Activated CD4-positive, alpha-beta T cell treated with anti-CD3 and anti-CD28 coated beads for 36 hours (primary cell): ENCODE measurements at regions of chr17 and their contacts with region 1.

Region 1: GRCh38 chr17:15257258-15257788 is 7.8 kb downstream of the PMP22 start:
- DNase-seq: peak; percentile 73
- ATAC-seq: peak; percentile 62
- H3K4me3 Mint-ChIP-seq: no peak overlapping the region
- H3K27ac Mint-ChIP-seq: no peak overlapping the region
- H3K4me1 Mint-ChIP-seq: peaks cover 15% of the 10 kb centered on the region
- H3K27me3 Mint-ChIP-seq: peaks cover 59% of the 10 kb centered on the region

Region 2: DNA sequence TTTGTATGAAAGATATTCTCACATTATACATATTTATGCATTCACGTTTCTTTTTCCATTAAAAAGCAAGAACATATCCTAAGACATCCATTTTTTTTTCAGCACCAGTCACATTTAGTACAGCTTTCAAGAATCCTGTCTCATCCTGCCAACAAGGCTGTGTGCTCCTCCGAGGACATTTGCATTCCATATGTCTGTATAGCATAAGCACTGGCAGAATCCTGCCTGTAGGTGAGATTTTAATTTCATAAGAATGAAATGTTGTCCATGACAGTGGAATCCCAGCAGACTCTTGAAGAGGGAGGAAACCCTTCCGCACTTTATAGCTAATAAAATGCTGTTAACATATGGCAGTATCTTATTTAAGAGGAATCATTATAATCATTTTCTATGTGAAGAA is 10.7 kb after region 1 on chr17:
- CTCF ChIA-PET with region 1: interaction called, 14 read pairs
- POLR2A ChIA-PET with region 1: no interaction called
- intact Hi-C with region 1: no loop called
- DNase-seq: no peak
- ATAC-seq: no peak
- H3K4me3 Mint-ChIP-seq: no peak overlapping the region
- H3K27ac Mint-ChIP-seq: no peak overlapping the region
- H3K4me1 Mint-ChIP-seq: peaks cover 6% of the 10 kb centered on the region
- H3K27me3 Mint-ChIP-seq: peaks cover 38% of the 10 kb centered on the region

Region 3: DNA sequence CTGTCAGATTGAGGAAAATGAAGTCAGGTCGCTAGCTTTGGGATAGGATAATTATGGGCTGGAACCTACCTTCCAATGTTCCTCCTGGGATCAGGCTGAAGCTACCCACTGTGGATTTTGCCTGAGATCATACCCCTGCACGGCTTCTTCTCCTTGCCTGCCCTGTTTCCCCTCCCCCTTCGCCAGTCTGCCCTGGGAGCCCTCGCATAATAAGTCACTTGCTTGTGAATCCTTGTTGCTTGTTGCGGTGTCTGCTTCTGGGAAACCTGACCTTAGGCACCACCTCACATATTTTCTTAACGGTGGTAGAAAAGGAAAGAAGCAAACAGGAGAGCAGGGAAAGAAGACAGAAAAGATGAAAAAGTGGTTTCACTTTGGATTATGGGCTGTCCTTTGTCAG is 21.1 kb after region 1 on chr17:
- CTCF ChIA-PET with region 1: no interaction called
- POLR2A ChIA-PET with region 1: no interaction called
- intact Hi-C with region 1: no loop called
- DNase-seq: no peak
- ATAC-seq: no peak
- H3K4me3 Mint-ChIP-seq: no peak overlapping the region
- H3K27ac Mint-ChIP-seq: no peak overlapping the region
- H3K4me1 Mint-ChIP-seq: peaks cover 7% of the 10 kb centered on the region
- H3K27me3 Mint-ChIP-seq: peaks cover 20% of the 10 kb centered on the region

Region 4: GRCh38 chr17:16027708-16028584 is 770.6 kb after region 1 on chr17:
- CTCF ChIA-PET with region 1: no interaction called
- POLR2A ChIA-PET with region 1: no interaction called
- intact Hi-C with region 1: no loop called
- DNase-seq: peak; percentile 80
- ATAC-seq: peak; percentile 98
- H3K4me3 Mint-ChIP-seq: peak overlapping the region; percentile 61
- H3K27ac Mint-ChIP-seq: peak overlapping the region; percentile 97
- H3K4me1 Mint-ChIP-seq: peaks cover 48% of the 10 kb centered on the region
- H3K27me3 Mint-ChIP-seq: no peaks in the 10 kb centered on the region